Cardiac septum (tissue), 1 donor: ENCODE measurements at regions of chr10 and their contacts with region 1.

Region 1: GRCh38 chr10:75401569-75402485 is at the start of gene ZNF503:
- DNase-seq: peak; percentile 97
- total RNA-seq, gene ZNF503: 3.3 TPM

Region 2: DNA sequence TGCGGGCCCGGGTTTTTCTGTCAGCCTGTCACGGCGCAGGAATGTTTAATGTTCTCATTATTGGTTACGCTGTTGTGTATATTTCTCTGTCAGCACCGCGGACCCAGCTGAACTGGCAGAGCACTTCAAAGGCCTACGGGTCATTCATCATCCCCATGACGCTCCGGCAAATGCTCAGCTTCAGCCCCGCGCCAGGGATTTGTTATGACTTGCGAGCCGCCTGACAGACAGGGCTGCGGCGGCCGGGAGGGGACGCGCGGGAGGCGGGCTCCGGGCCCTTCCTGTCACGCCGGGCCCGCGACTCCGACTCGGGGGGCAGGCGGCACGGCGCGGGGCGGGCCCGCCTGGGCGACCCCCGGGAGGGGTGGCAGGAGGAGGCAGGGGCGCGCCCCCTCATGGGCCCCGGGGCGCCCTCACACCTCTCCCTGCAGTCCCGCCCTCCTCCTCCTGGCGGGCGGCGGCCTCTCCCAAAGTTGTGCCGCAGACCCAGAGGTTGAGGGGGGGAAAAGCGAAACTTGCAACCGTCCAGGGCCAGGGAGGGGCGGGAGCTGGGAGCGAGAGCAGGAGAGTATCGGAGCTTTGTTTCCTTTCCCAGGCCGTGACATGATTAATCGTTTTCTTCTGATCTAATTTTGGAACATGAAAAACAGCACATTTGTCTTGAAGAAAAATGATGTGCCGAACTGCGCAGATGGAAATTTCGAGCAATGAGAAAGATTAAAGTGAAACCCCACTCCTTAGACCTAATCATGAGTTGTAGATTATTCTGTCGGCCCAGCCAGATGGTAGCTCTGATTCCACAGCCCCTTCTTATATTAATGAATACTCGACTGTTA is 106.7 kb before region 1 on chr10:
- intact Hi-C with region 1: loop called (anchors 5 kb)
- DNase-seq: peak; percentile 86

Region 3: GRCh38 chr10:75312440-75312839 is 89.4 kb before region 1 on chr10:
- intact Hi-C with region 1: no loop called
- DNase-seq: no peak

Region 4: DNA sequence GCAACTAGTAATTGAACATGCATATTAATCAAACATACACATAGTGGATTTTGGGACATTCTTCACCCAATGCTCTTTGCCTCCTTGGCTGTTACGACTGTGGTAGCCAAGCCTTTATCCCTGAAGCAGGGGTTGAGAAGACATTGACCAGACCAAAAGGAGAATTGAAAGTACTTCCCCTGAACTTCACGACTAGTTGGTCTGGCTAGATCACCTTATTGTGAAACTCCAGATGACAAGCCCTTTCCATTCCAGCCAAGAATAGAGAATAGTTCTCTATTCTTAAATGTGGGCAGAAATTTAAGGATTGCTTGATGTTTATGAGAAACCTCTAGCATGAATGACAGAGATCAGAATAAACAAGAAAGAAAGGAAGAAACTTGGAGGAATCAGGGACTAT is 126.6 kb after region 1 on chr10:
- intact Hi-C with region 1: no loop called
- DNase-seq: no peak

Region 5: GRCh38 chr10:75651417-75651816 is 249.6 kb after region 1 on chr10:
- intact Hi-C with region 1: loop called (anchors 2 kb)
- DNase-seq: no peak

Region 6: GRCh38 chr10:75910032-75910431 is 508.2 kb after region 1 on chr10:
- intact Hi-C with region 1: loop called (anchors 5 kb)
- DNase-seq: no peak

Region 7: DNA sequence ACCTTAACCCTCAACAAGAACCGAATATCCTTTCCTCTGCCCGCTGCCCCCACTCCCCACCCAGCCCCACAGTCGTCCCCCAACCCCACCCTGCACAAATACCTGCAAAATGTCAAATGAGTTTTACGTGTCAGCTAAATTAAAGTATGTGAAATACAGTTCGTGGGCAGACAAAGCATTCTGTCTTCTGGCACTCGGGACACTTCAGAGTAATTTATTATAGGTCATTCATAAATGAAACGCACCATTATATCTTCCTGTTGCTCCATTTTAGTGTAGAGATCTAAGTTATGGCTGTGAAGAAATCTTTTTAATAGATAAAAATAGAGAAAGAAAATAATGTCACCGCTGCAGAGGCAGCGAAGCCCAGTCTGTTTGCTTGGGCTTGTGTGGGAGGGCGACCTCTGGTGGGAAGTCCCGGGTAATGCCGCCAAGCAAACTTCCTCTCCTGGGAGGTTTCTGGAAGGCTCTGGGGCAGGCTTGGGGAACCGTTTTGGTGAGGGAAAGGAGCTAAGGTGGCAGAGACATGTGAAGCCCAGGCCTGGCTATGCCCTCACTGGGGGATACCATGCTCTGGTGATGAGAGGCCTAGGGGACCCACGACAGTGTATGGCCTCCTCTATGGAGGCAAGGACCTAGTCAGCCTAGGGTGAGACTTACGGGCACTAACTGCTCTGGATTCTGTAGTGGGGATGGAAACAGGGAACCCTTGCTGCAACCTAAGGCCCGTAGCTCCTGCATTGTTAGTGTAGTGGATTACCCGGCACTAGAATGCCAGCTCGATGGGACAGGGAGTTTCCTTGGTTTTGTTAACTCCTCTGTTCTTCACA is 634.5 kb after region 1 on chr10:
- intact Hi-C with region 1: loop called (anchors 1 kb)
- DNase-seq: peak; percentile 85

Region 8: GRCh38 chr10:76547352-76547972 is 1145.6 kb after region 1 on chr10:
- intact Hi-C with region 1: loop called (anchors 5 kb)
- DNase-seq: peak; percentile 77